ENCODE measurements at regions of chr3 and their contacts with region 1.

Region 1: DNA sequence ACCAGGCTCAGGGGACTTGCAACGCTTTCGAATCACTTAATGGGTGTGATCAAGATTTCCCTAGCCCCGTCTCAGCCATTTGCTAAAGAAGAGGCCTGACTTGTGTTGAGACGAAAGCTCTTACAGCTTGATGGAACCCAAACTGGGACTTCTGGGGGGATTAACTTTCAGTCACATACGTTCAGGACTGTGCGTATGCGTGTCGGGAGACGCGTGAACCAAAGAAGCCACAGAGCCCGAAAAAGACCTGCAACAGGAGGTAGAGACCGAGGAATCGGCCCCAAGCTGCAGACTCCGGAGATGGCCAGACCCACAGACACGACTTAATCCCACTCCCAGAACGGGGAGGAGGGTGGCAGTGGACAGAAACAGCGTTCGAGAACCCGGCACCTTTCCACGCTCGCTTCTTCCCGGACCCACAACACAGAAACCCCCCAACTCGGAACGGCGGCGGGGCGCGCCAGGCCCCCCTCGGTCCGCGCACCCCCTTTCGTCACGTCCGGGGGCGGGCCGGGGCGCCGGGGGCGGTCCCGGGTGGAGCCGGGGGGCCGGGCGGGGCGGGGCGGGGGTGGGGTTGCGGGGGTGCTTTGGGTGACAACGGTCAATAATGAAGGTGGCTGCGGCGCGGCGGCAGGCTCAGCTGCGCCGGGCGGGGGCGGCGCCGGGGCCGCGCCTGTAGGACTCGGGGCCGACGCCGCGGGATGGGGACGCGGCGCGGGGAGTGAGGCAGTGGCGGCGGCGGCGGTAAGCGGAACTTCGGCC is at the start of gene ATP11B:
- DNase-seq: peak; percentile 82 to 87
- ATAC-seq: peak; percentile 76 to 92 (median 83)
- H3K4me3 ChIP-seq: peak within 1 kb of the TSS; percentile 96
- H3K4me3 Mint-ChIP-seq: peak within 1 kb of the TSS; percentile 99
- H3K27ac ChIP-seq: peak within 1 kb of the TSS; percentile 100
- H3K27ac Mint-ChIP-seq: peak within 1 kb of the TSS; percentile 97 to 98
- H3K4me1 ChIP-seq: peaks cover 13% of the 10 kb centered on the region
- H3K4me1 Mint-ChIP-seq: peaks cover 40 to 45% of the 10 kb centered on the region in 2 donors
- H3K27me3 ChIP-seq: no peaks in the 10 kb centered on the region
- H3K27me3 Mint-ChIP-seq: peaks cover 0 to 5% of the 10 kb centered on the region in 2 donors
- CTCF ChIP-seq: no peak
- total RNA-seq, gene ATP11B: 157 to 174 (median 172) TPM

Region 2: DNA sequence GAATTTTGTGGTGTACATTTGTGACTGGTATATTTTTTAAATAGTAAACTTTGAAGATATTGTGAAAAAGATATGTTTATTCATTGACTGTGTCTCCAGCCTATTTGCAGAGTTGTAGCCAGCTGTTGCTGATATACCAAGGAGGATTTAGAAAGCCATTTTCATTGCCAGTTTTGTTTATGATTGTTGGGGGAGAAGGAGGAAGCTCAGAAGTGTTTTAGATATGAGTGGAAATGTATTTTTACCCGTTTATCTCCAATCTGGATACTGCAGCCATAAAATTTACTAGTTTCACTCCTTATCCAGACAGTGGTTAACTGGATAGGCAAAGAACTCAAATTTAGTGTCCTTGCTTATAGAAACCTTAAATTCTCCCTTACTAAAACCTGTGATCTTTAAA is 19.0 kb after region 1 on chr3:
- intact Hi-C with region 1: loop called (anchors 2 kb)
- DNase-seq: no peak
- ATAC-seq: no peak
- H3K4me3 ChIP-seq: no peak overlapping the region
- H3K4me3 Mint-ChIP-seq: no peak overlapping the region
- H3K27ac ChIP-seq: no peak overlapping the region
- H3K27ac Mint-ChIP-seq: no peak overlapping the region
- H3K4me1 ChIP-seq: peaks cover 3% of the 10 kb centered on the region
- H3K4me1 Mint-ChIP-seq: peaks cover 62 to 64% of the 10 kb centered on the region in 2 donors
- H3K27me3 ChIP-seq: no peaks in the 10 kb centered on the region
- H3K27me3 Mint-ChIP-seq: no peaks in the 10 kb centered on the region
- CTCF ChIP-seq: no peak

Region 3: DNA sequence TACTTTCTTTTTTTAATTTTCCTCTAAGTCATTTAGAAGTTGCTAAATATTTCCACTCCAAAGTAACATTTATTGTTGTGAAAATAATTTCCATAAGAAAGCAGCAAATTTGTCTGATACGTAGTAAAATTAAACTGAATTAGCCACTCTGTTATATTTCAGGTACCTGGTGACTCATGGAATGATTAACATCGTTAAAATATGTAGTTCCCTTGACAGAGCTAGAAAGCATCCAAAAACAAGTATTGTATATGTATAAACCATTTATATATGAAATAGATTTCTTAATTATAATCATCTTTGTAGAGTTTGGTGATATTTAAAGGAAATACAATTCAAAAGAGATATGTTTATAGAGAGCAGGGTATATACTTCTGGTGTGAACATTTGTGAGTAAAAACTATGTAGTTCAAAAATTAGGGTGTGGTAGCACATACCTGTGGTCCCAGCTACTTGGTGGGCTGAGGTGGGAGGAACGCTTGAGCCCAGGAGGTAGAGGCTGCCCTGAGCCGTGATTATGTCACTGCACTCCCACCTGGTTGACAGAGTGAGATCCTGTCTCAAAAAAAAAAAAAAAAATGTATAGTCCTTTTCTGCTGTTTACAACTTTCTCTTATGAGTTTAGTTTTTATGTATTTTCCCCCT is 36.8 kb after region 1 on chr3:
- intact Hi-C with region 1: loop called (anchors 5 kb)
- DNase-seq: no peak
- ATAC-seq: no peak
- H3K4me3 ChIP-seq: peak overlapping the region; percentile 3
- H3K4me3 Mint-ChIP-seq: no peak overlapping the region
- H3K27ac ChIP-seq: no peak overlapping the region
- H3K27ac Mint-ChIP-seq: peak overlapping the region in 1 of 2 donors; percentile 36
- H3K4me1 ChIP-seq: no peaks in the 10 kb centered on the region
- H3K4me1 Mint-ChIP-seq: peaks cover 31 to 52% of the 10 kb centered on the region in 2 donors
- H3K27me3 ChIP-seq: no peaks in the 10 kb centered on the region
- H3K27me3 Mint-ChIP-seq: no peaks in the 10 kb centered on the region
- CTCF ChIP-seq: no peak

Region 4: DNA sequence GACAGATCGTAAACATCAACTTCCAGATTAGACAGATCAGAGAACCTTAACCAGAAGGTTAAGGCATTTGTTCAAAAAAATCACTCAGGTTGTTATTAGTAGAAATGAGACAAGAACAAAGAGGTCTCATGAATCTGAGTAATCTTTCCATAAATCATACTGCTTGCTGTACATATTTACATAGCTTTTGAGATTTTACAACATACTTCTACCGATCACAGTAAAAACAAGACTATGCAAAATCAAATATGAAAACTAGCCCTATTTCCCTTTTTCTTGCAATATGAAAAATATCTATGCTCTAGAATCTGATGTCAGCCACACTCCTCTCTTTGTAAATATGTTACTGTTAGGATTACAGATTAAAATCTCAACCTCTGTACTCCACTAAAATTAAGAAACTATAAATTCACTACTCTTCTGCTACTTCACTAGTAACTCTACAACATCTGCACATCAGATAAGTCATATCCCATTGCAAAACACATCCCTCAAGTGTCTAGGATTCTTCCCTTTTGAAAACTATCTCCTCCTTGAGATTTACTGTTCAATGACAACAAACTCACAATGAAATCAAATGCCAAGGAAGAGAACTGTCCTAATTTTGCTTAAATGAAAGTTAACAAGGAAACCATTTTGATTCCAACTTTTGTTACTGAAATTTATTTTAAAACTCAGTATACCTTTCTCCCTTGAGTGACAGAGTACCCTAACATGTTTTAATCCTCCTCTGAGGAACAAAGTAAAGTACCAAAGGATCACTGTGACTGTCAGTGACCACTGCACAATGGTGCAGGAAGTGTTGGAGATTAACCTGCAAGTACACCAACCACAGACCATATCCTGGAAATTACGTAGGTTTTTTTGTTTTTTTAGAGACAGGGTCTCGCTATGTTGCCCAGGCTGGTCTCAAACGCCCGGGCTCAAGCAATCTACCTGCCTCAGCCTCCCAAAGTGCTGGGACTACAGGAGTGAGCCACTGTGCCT is 174.4 kb after region 1 on chr3:
- intact Hi-C with region 1: loop called (anchors 10 kb)
- DNase-seq: peak in 1 of 2 donors; percentile 41
- ATAC-seq: peak; percentile 62 to 72 (median 70)
- H3K4me3 ChIP-seq: no peak overlapping the region
- H3K4me3 Mint-ChIP-seq: peak overlapping the region; percentile 5
- H3K27ac ChIP-seq: no peak overlapping the region
- H3K27ac Mint-ChIP-seq: peak overlapping the region; percentile 69 to 71
- H3K4me1 ChIP-seq: peaks cover 19% of the 10 kb centered on the region
- H3K4me1 Mint-ChIP-seq: peaks cover 44 to 50% of the 10 kb centered on the region in 2 donors
- H3K27me3 ChIP-seq: no peaks in the 10 kb centered on the region
- H3K27me3 Mint-ChIP-seq: no peaks in the 10 kb centered on the region
- CTCF ChIP-seq: no peak